Heart left ventricle (tissue), 16 donors: ENCODE measurements at regions of chr15 and their contacts with region 1.

Region 1: DNA sequence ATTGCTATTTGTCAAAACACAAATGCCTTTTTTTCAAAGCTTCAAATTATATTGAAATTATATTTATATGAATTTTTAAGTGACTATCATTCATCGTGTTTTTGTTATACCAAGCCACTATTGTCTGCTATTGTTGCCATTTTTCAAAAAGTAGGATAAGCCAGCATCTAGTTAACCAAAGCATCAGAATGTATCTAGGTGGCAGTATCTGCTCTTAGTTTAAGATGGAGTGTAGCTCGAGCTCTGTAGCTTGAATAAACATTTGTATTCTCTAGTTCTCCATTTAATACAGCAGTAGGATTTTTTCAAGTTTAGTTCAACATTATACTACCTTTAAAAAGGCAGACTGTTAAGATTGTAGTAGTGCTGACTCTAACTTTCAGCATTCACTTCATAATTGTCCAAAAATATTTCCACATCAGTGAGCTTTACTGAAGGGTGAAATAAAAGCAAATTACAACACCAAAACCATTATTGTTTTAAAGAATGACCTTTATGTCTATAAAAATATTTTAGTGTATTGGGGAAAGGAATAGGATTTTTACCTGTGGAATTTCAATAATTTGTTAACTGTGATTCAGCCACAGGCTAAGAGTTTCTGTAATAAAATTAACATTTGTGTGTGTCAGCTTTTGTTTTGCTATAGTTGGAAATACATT is 19.6 kb upstream of the C15orf61 start:
- DNase-seq: no peak
- ATAC-seq: peak in 1 of 4 donors; percentile 39
- H3K4me3 ChIP-seq: peak overlapping the region in 1 of 12 donors; percentile 5
- H3K27ac ChIP-seq: no peak overlapping the region
- H3K4me1 ChIP-seq: peaks cover 0 to 6% (median 0%) of the 10 kb centered on the region in 12 donors
- H3K27me3 ChIP-seq: no peaks in the 10 kb centered on the region
- CTCF ChIP-seq: peak in 9 of 12 donors; percentile 10 to 52 (median 38)
- POLR2A ChIP-seq: no peak

Region 2: GRCh38 chr15:67833710-67834511 is 332.6 kb after region 1 on chr15:
- intact Hi-C with region 1: loop called in 5 of 10 experiments (anchors 2 to 5 kb)
- DNase-seq: peak in 1 of 5 donors; percentile 74
- ATAC-seq: peak in 3 of 4 donors; percentile 13 to 37 (median 30)
- H3K4me3 ChIP-seq: peak overlapping the region in 10 of 12 donors; percentile 25 to 59 (median 45)
- H3K27ac ChIP-seq: no peak overlapping the region
- H3K4me1 ChIP-seq: peaks cover 2 to 61% (median 48%) of the 10 kb centered on the region in 12 donors
- H3K27me3 ChIP-seq: peaks cover 50 to 74% (median 71%) of the 10 kb centered on the region in 9 donors
- CTCF ChIP-seq: peak; percentile 16 to 59 (median 44)
- POLR2A ChIP-seq: no peak